Dendritic cell treated with granulocyte-macrophage colony-stimulating factor and Interleukin-4, amounts not matched to agents 40 ng/mL and 50 ng/mL, for 4 days (primary cell): ENCODE measurements at regions of chr5 and their contacts with region 1.

Region 1: GRCh38 chr5:42889311-42889933 is 77.7 kb upstream of the SELENOP start:
- H3K4me3 Mint-ChIP-seq: no peak overlapping the region
- H3K27ac Mint-ChIP-seq: no peak overlapping the region
- H3K4me1 Mint-ChIP-seq: no peaks in the 10 kb centered on the region
- H3K27me3 Mint-ChIP-seq: no peaks in the 10 kb centered on the region

Region 2: GRCh38 chr5:41856644-41857491 is 1032.6 kb before region 1 on chr5:
- intact Hi-C with region 1: loop called (anchors 5 kb)
- H3K4me3 Mint-ChIP-seq: no peak overlapping the region
- H3K27ac Mint-ChIP-seq: no peak overlapping the region
- H3K4me1 Mint-ChIP-seq: no peaks in the 10 kb centered on the region
- H3K27me3 Mint-ChIP-seq: no peaks in the 10 kb centered on the region

Region 3: DNA sequence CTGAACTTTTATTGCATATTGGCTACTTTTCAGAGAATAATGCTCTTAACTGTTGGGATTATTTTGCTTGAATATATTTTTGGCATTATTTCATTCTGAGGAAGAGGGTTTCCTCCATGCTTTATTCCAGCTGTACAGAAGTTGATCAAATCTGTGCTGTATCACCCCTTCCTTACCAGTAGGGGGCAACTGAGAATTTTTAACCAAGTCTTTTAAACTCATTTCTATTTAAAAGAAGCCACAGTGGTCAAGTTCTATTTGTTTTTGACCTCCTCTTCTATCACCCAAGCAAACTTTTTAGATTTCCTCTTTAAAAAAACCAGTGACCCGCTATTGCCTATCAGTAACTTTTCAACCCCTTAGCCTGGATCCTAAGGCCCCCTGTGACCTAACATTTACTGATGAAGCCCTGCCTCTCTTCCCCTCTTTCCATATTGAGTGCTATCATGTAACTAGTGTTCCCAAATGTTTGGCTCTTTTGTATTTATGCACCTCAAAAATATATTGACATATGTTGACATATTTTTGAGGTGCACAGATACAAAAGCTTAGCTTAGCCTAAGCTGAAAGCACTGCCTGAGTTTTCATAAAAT is 883.8 kb before region 1 on chr5:
- intact Hi-C with region 1: loop called (anchors 5 kb)
- H3K4me3 Mint-ChIP-seq: no peak overlapping the region
- H3K27ac Mint-ChIP-seq: no peak overlapping the region
- H3K4me1 Mint-ChIP-seq: no peaks in the 10 kb centered on the region
- H3K27me3 Mint-ChIP-seq: no peaks in the 10 kb centered on the region

Region 4: DNA sequence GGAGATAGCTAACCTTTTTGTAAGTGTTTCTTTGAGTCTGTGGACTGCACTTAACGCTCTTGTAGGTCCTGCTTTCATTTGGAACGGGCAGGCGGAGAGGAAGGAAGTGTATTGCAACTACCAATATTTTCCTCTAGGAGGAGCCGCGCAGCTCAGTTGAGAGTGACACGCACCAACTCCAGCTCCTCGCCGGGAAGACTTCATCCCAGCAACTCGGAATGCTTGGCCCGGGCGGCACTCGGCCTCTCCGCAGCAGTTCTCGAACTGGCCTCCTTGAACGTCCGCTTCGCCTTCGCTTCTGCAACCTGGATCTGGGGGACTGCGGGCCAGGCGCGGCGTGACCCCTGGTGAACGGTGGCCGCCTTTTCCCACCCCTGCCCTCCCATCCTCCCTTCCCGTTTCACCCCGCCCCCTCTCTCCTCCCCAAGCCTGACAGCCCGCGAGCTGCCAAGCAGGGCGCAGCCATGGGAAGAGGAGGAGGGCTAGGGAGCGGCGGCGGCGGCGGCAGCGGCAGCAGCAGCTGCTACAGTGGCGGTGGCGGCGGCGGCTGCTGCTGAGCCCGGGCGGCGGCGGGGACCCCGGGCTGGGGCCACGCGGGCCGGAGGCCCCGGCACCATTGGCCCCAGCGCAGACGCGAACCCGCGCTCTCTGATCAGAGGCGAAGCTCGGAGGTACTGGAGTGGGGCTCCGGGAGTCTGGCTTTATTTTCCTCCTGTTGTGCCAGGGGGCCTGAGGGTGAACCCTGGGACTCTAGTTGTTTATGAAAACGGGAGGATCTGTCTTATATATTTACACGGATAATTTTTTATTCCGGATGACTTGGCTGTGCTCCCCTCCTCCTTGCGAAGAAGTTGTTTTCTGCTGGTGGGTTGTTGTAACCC is 465.9 kb before region 1 on chr5 and contains the start of gene GHR:
- intact Hi-C with region 1: loop called (anchors 10 kb)
- H3K4me3 Mint-ChIP-seq: no peak within 1 kb of the TSS
- H3K27ac Mint-ChIP-seq: no peak within 1 kb of the TSS
- H3K4me1 Mint-ChIP-seq: no peaks in the 10 kb centered on the region
- H3K27me3 Mint-ChIP-seq: peaks cover 5% of the 10 kb centered on the region

Region 5: GRCh38 chr5:42583322-42583721 is 306.1 kb before region 1 on chr5:
- intact Hi-C with region 1: loop called (anchors 1 kb)
- H3K4me3 Mint-ChIP-seq: no peak overlapping the region
- H3K27ac Mint-ChIP-seq: no peak overlapping the region
- H3K4me1 Mint-ChIP-seq: peaks cover 12% of the 10 kb centered on the region
- H3K27me3 Mint-ChIP-seq: peaks cover 1% of the 10 kb centered on the region

Region 6: GRCh38 chr5:42828671-42829070 is 60.8 kb before region 1 on chr5:
- intact Hi-C with region 1: no loop called
- H3K4me3 Mint-ChIP-seq: no peak overlapping the region
- H3K27ac Mint-ChIP-seq: no peak overlapping the region
- H3K4me1 Mint-ChIP-seq: no peaks in the 10 kb centered on the region
- H3K27me3 Mint-ChIP-seq: no peaks in the 10 kb centered on the region

Region 7: GRCh38 chr5:43120720-43121564 is 231.5 kb after region 1 on chr5 and contains the start of gene ZNF131:
- intact Hi-C with region 1: no loop called
- H3K4me3 Mint-ChIP-seq: peak within 1 kb of the TSS; percentile 96
- H3K27ac Mint-ChIP-seq: peak within 1 kb of the TSS; percentile 98
- H3K4me1 Mint-ChIP-seq: peaks cover 27% of the 10 kb centered on the region
- H3K27me3 Mint-ChIP-seq: peaks cover 2% of the 10 kb centered on the region